ENCODE measurements at regions of chr14 and their contacts with region 1.

Region 1: GRCh38 chr14:60553808-60554207 is 44.9 kb downstream of the SIX6 start:
- DNase-seq: no peak
- H3K4me3 ChIP-seq: no peak overlapping the region
- H3K27ac ChIP-seq: no peak overlapping the region
- H3K4me1 ChIP-seq: no peaks in the 10 kb centered on the region
- H3K27me3 ChIP-seq: peaks cover 0 to 28% (median 0%) of the 10 kb centered on the region in 7 donors
- CTCF ChIP-seq: no peak
- POLR2A ChIP-seq: no peak

Region 2: GRCh38 chr14:60349663-60350365 is 204.0 kb before region 1 on chr14:
- intact Hi-C with region 1: loop called (anchors 10 kb)
- DNase-seq: no peak
- H3K4me3 ChIP-seq: no peak overlapping the region
- H3K27ac ChIP-seq: no peak overlapping the region
- H3K4me1 ChIP-seq: peaks cover 0 to 5% (median 0%) of the 10 kb centered on the region in 6 donors
- H3K27me3 ChIP-seq: peaks cover 0 to 12% (median 0%) of the 10 kb centered on the region in 7 donors
- CTCF ChIP-seq: peak in 9 of 11 experiments; percentile 36 to 75 (median 65)
- POLR2A ChIP-seq: no peak

Region 3: DNA sequence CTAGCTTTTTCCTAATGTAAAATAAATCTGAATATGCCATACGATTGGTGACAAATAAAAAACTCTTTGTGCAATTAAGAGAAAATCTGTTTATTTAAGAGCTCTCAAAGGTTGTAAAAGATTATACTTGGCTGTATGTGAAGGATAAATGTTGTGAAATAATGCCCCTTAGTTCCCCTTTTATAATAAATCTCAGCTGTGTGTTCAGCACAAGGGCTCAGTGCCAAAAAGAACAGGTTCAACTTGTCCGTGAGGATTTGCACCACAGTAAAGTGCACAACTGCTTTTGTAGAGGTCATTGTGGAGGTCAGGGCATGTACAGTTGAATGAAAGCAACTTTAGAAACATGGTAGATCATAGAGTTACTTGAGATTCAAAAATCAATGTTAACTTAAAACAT is 308.5 kb after region 1 on chr14:
- intact Hi-C with region 1: no loop called
- DNase-seq: no peak
- H3K4me3 ChIP-seq: no peak overlapping the region
- H3K27ac ChIP-seq: no peak overlapping the region
- H3K4me1 ChIP-seq: peaks cover 0 to 4% (median 0%) of the 10 kb centered on the region in 6 donors
- H3K27me3 ChIP-seq: no peaks in the 10 kb centered on the region
- CTCF ChIP-seq: no peak
- POLR2A ChIP-seq: no peak

Region 4: GRCh38 chr14:61064210-61064609 is 510.4 kb after region 1 on chr14:
- intact Hi-C with region 1: no loop called
- DNase-seq: no peak
- H3K4me3 ChIP-seq: no peak overlapping the region
- H3K27ac ChIP-seq: no peak overlapping the region
- H3K4me1 ChIP-seq: no peaks in the 10 kb centered on the region
- H3K27me3 ChIP-seq: no peaks in the 10 kb centered on the region
- CTCF ChIP-seq: no peak
- POLR2A ChIP-seq: no peak

Measured in spleen (tissue), 13 donors.